GM10248 (cell line): ENCODE measurements at regions of chr7 and their contacts with region 1.

Region 1: GRCh38 chr7:134605973-134606923 is 40.4 kb upstream of the BPGM start:
- DNase-seq: peak; percentile 58
- CTCF ChIP-seq: peak; percentile 77

Region 2: GRCh38 chr7:134448700-134449229 is 157.5 kb before region 1 on chr7:
- CTCF ChIA-PET with region 1: no interaction called
- POLR2A ChIA-PET with region 1: no interaction called
- DNase-seq: no peak
- CTCF ChIP-seq: no peak

Region 3: DNA sequence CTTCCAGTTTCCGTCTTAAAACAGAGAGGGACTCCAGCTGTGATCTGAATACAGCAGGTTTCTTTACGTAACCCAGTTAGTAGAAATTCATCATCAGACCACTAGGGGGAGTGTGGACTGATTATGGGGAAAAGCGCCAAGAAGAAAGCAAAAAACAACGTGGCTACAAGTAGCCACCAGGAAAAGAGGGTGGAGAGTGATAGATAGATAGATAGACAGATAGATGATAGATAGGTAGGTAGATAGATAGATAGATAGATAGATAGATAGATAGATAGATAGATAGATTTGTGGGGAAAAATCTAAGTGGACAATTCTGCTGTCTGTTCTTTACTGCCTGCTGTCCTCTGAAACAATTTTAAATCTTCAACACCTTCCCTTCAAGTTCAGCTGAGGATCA is 91.6 kb before region 1 on chr7:
- CTCF ChIA-PET with region 1: interaction called, 33 read pairs
- POLR2A ChIA-PET with region 1: no interaction called
- DNase-seq: peak; percentile 64
- CTCF ChIP-seq: peak; percentile 71